ENCODE measurements at regions of chr3 and their contacts with region 1.

Region 1: GRCh38 chr3:155317211-155317610 is 23.7 kb upstream of the STRIT1 start:
- DNase-seq: no peak
- ATAC-seq: no peak
- H3K4me3 ChIP-seq: no peak overlapping the region
- H3K27ac ChIP-seq: peak overlapping the region; percentile 75
- H3K4me1 ChIP-seq: peaks cover 47% of the 10 kb centered on the region
- H3K27me3 ChIP-seq: no peaks in the 10 kb centered on the region
- CTCF ChIP-seq: no peak

Region 2: GRCh38 chr3:154954753-154955152 is 362.5 kb before region 1 on chr3:
- intact Hi-C with region 1: loop called (anchors 1 to 10 kb)
- DNase-seq: no peak
- ATAC-seq: peak in 3 of 4 donors; percentile 67 to 84 (median 78)
- H3K4me3 ChIP-seq: no peak overlapping the region
- H3K27ac ChIP-seq: no peak overlapping the region
- H3K4me1 ChIP-seq: peaks cover 6% of the 10 kb centered on the region
- H3K27me3 ChIP-seq: no peaks in the 10 kb centered on the region
- CTCF ChIP-seq: peak; percentile 41

Region 3: GRCh38 chr3:155194973-155195957 is 121.9 kb before region 1 on chr3:
- intact Hi-C with region 1: loop called in 1 of 2 experiments (anchors 2 kb)
- DNase-seq: no peak
- ATAC-seq: peak in 1 of 4 donors; percentile 28
- H3K4me3 ChIP-seq: no peak overlapping the region
- H3K27ac ChIP-seq: peak overlapping the region; percentile 90
- H3K4me1 ChIP-seq: peaks cover 29% of the 10 kb centered on the region
- H3K27me3 ChIP-seq: no peaks in the 10 kb centered on the region
- CTCF ChIP-seq: no peak

Region 4: GRCh38 chr3:155244216-155244615 is 73.0 kb before region 1 on chr3:
- intact Hi-C with region 1: loop called in 1 of 2 experiments (anchors 5 kb)
- DNase-seq: no peak
- ATAC-seq: no peak
- H3K4me3 ChIP-seq: no peak overlapping the region
- H3K27ac ChIP-seq: no peak overlapping the region
- H3K4me1 ChIP-seq: peaks cover 10% of the 10 kb centered on the region
- H3K27me3 ChIP-seq: no peaks in the 10 kb centered on the region
- CTCF ChIP-seq: no peak

Region 5: GRCh38 chr3:155481089-155481488 is 163.9 kb after region 1 on chr3:
- intact Hi-C with region 1: no loop called
- DNase-seq: no peak
- ATAC-seq: no peak
- H3K4me3 ChIP-seq: no peak overlapping the region
- H3K27ac ChIP-seq: no peak overlapping the region
- H3K4me1 ChIP-seq: no peaks in the 10 kb centered on the region
- H3K27me3 ChIP-seq: no peaks in the 10 kb centered on the region
- CTCF ChIP-seq: no peak